ENCODE measurements at regions of chr4 and their contacts with region 1.

Region 1: GRCh38 chr4:76515975-76516843 is 81.2 kb downstream of the SHROOM3 start:
- DNase-seq: no peak
- ATAC-seq: no peak

Region 2: GRCh38 chr4:76354517-76355473 is 161.4 kb before region 1 on chr4:
- intact Hi-C with region 1: no loop called
- DNase-seq: no peak
- ATAC-seq: no peak

Region 3: DNA sequence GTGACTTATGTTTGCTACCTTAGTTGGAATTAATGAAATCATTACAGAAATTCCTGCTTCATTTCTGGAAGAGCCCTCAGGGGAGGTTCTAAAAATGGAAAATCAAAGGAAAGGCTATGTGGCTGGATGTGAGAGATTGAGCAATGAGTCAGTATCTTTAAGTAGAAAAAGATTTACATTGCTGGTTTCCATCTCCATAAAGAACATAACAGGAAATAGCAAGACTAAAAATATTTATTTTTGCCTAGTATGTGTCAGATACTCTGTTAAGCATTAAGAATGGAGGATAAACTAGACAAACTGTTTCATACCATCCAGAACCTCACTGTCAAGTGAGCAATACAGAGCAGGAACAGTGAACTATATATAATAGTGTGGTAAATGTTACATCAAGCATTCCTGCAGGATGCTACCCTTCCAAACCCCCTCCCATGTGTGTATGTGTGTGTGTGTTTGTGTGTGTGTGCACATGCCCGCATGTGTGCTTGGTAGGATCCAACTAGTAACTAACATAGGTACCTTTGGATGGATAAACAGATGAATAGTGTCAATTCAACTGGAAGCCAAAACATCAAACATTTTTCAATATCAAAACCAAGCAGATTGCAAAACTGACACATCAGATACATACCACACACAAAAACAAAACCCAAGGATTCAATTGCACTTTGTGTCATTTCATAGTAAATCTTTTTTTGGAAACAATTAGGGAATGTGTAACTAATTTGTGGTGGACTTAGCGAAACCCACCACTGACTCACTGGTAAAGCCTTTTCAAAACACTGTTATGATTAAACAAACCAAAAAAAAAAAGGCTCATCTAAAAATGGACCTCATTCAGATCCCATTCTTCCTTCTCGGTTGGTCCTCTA is 142.3 kb after region 1 on chr4:
- intact Hi-C with region 1: loop called (anchors 10 kb)
- DNase-seq: no peak
- ATAC-seq: no peak

Region 4: GRCh38 chr4:76758290-76758882 is 242.2 kb after region 1 on chr4:
- intact Hi-C with region 1: loop called (anchors 5 kb)
- DNase-seq: no peak
- ATAC-seq: peak; percentile 76

Region 5: GRCh38 chr4:77203380-77204197 is 687.4 kb after region 1 on chr4:
- intact Hi-C with region 1: loop called (anchors 5 kb)
- DNase-seq: peak; percentile 44
- ATAC-seq: peak; percentile 80